ENCODE measurements at regions of chr6 and their contacts with region 1.

Region 1: DNA sequence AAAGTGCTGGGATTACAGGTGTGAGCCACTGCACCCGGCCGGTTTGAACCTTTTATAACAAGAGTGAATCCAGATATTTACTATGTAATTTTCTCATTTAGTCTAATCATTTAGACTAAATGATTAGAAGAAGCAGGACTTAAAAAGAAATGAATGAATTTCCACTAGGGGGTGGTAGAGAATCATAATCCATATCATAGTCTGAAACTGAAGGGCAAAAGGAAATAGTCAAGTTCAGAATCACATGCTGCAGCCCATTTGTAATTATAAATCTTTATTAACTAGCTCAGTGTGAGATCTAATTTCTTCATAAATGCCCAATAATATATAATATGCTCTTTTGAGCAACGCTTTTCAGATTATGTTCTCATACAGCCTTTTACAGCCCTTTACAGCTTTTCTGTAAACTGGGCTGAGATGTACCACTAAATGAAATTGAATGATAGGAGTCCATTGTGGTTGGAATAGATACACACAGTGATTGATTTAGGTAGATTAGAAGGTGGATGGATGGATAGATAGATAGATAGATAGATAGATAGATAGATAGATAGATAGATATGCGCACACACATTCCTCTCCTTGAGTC is 31.8 kb downstream of the PSMB9 start:
- H3K4me3 ChIP-seq: no peak overlapping the region
- H3K27ac ChIP-seq: no peak overlapping the region
- H3K4me1 ChIP-seq: peaks cover 4% of the 10 kb centered on the region
- CTCF ChIP-seq: peak; percentile 28

Region 2: GRCh38 chr6:32906539-32906938 is 20.7 kb after region 1 on chr6:
- CTCF ChIA-PET with region 1: interaction called, 15 read pairs
- POLR2A ChIA-PET with region 1: no interaction called
- H3K4me3 ChIP-seq: no peak overlapping the region
- H3K27ac ChIP-seq: no peak overlapping the region
- H3K4me1 ChIP-seq: peaks cover 11% of the 10 kb centered on the region
- CTCF ChIP-seq: no peak

Region 3: DNA sequence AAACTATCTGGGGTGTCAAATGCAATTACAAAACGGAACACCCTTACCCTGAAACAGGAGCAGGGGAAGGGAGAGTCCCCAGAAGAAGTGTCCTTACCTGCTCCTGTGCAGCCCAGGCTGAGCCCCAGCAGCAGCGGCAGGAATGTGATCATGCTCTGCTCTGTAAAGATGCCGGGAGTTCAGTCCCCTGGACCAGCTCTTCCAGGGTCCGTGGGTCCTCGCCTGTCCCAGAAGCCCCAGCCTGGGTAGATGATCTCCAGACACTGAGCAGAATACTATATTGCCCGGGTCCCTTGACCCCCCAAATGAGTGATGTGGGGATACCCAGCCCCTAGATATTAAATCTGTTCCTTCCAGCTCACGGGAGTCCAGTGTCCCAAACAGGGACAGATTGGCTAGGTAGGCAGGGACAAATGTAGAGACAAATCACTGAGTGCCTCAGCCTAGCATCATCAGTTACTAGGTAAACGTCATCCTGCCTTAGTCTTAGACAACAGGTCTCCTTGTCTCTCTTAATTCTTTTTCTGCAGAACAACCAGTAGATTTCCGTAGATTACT is 54.9 kb after region 1 on chr6 and contains the start of gene HLA-DMB:
- CTCF ChIA-PET with region 1: interaction called, 27 read pairs
- POLR2A ChIA-PET with region 1: no interaction called
- H3K4me3 ChIP-seq: peak within 1 kb of the TSS; percentile 57
- H3K27ac ChIP-seq: no peak within 1 kb of the TSS
- H3K4me1 ChIP-seq: no peaks in the 10 kb centered on the region
- CTCF ChIP-seq: no peak

Region 4: GRCh38 chr6:32947552-32948465 is 62.0 kb after region 1 on chr6:
- CTCF ChIA-PET with region 1: interaction called, 58 read pairs
- POLR2A ChIA-PET with region 1: no interaction called
- H3K4me3 ChIP-seq: no peak overlapping the region
- H3K27ac ChIP-seq: no peak overlapping the region
- H3K4me1 ChIP-seq: no peaks in the 10 kb centered on the region
- CTCF ChIP-seq: peak; percentile 82